Heart left ventricle (tissue), 16 donors: ENCODE measurements at regions of chr4 and their contacts with region 1.

Region 1: GRCh38 chr4:51895813-51896408 is 53.0 kb downstream of the DCUN1D4 start:
- DNase-seq: peak in 4 of 5 donors; percentile 61 to 66 (median 65)
- ATAC-seq: peak; percentile 64 to 96 (median 94)
- H3K4me3 ChIP-seq: no peak overlapping the region
- H3K27ac ChIP-seq: peak overlapping the region in 3 of 12 donors; percentile 0 to 41 (median 31)
- H3K4me1 ChIP-seq: peaks cover 0 to 13% (median 0%) of the 10 kb centered on the region in 12 donors
- H3K27me3 ChIP-seq: no peaks in the 10 kb centered on the region
- CTCF ChIP-seq: peak; percentile 71 to 91 (median 79)
- POLR2A ChIP-seq: no peak

Region 2: DNA sequence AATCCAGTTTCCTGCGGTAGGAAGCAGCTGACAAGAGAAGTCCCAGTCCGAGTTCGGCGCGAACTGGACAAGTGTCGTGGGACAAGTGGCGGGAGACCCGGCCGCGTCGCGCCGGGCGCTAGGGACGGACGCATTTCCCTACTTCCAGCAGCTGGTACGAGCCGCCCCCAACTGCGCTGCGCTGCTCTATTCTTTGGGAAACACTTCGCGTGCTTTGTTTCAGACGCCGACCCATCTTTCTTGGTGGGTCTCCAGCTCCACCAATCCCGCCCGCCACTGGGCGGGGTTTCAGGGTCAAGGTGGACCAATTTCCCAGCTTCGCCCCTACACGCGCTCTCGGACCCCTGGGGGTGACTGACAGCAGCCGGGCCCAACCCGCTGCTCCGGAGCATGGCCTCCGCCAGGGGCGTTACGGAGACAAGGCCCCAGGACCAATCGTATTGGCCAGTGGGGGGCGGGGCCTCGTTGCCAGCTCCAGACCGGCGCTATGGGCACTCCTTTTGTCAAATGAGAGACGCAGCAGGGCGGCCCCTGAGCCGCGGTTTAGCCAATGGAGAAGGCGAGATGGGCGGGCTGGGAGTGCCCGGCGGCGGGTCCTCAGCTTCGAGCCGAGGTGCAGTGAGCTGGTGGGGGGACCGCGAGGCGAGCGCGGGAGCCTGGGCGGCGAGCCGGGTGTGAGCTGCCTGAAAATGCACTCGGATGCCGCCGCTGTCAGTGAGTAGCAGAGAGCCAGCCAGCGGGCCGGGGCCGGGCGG is 53.2 kb before region 1 on chr4 and contains the start of gene DCUN1D4:
- intact Hi-C with region 1: loop called in 1 of 10 experiments (anchors 5 kb)
- DNase-seq: peak; percentile 100
- ATAC-seq: peak; percentile 93 to 98 (median 96)
- H3K4me3 ChIP-seq: peak within 1 kb of the TSS; percentile 68 to 95 (median 88)
- H3K27ac ChIP-seq: peak within 1 kb of the TSS; percentile 76 to 99 (median 93)
- H3K4me1 ChIP-seq: peaks cover 0 to 24% (median 11%) of the 10 kb centered on the region in 12 donors
- H3K27me3 ChIP-seq: no peaks in the 10 kb centered on the region
- CTCF ChIP-seq: peak; percentile 24 to 72 (median 46)
- POLR2A ChIP-seq: peak; percentile 31 to 71
- total RNA-seq, gene DCUN1D4: 16.6 to 54.0 (median 38.1) TPM

Region 3: DNA sequence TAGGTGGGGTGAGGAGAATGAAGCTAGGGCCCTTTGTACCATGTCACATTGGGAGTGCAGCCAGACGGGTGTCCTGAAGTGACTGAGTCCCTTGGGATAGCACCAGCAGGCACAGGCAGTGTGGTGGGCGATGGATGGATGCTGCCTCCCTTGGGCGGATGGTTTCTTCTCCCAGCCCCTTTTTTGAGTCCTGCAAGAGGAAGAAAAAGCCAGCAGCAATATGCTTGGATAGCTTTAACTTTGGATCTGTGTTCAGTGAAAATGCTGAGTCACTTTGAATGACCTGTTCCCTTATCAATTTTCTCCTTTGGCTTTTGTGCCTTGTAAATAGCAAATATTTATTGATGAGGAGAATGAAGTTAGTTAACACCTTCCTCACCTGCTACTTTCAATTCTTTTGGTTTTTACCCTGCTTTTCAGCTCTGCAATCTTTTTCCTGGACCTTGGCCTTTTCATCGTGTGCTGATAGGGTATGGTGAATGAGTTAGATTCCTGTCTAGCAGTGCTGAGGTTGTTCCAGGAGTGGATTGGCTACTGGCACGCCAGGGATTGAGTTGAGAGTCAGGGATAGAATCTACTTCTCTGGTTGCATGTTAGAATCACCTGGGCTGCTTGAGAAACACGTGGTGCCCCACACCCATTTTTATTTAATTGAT is 42.8 kb before region 1 on chr4:
- intact Hi-C with region 1: loop called in 1 of 10 experiments (anchors 5 kb)
- DNase-seq: no peak
- ATAC-seq: peak; percentile 62 to 75 (median 72)
- H3K4me3 ChIP-seq: no peak overlapping the region
- H3K27ac ChIP-seq: peak overlapping the region in 6 of 12 donors; percentile 18 to 44 (median 34)
- H3K4me1 ChIP-seq: peaks cover 0 to 62% (median 35%) of the 10 kb centered on the region in 12 donors
- H3K27me3 ChIP-seq: no peaks in the 10 kb centered on the region
- CTCF ChIP-seq: no peak
- POLR2A ChIP-seq: no peak

Region 4: DNA sequence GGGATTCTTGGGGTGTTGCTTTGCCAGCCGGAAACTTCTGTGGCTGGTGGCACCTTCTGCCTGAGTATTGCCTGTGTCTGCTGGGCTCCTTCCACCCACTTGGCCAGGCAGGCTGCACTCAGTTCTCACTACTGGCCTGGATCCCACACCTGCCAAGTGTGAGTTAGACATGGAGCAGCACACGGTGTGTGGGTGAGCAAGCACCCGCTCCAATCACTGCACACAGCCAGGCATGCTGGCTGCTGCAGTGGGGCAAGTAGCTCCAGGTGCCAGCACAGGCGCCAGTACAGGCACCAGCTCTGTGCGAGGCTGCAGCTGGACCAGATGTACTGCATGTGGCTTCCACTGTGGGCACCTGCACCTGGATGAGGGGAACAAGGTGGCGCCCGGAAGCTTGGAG is 29.1 kb before region 1 on chr4:
- intact Hi-C with region 1: no loop called
- DNase-seq: peak in 4 of 5 donors; percentile 20 to 58 (median 46)
- ATAC-seq: peak; percentile 58 to 93 (median 91)
- H3K4me3 ChIP-seq: no peak overlapping the region
- H3K27ac ChIP-seq: no peak overlapping the region
- H3K4me1 ChIP-seq: peaks cover 0 to 9% (median 0%) of the 10 kb centered on the region in 12 donors
- H3K27me3 ChIP-seq: no peaks in the 10 kb centered on the region
- CTCF ChIP-seq: no peak
- POLR2A ChIP-seq: no peak

Region 5: GRCh38 chr4:51932261-51932660 is 36.4 kb after region 1 on chr4:
- intact Hi-C with region 1: no loop called
- DNase-seq: peak in 2 of 5 donors; percentile 11 to 22
- ATAC-seq: peak; percentile 16 to 58 (median 48)
- H3K4me3 ChIP-seq: no peak overlapping the region
- H3K27ac ChIP-seq: no peak overlapping the region
- H3K4me1 ChIP-seq: peaks cover 0 to 7% (median 0%) of the 10 kb centered on the region in 12 donors
- H3K27me3 ChIP-seq: no peaks in the 10 kb centered on the region
- CTCF ChIP-seq: no peak
- POLR2A ChIP-seq: no peak

Region 6: GRCh38 chr4:52028969-52029368 is 133.1 kb after region 1 on chr4:
- intact Hi-C with region 1: loop called in 8 of 10 experiments (anchors 5 to 10 kb)
- DNase-seq: no peak
- ATAC-seq: no peak
- H3K4me3 ChIP-seq: no peak overlapping the region
- H3K27ac ChIP-seq: no peak overlapping the region
- H3K4me1 ChIP-seq: peaks cover 0 to 7% (median 0%) of the 10 kb centered on the region in 12 donors
- H3K27me3 ChIP-seq: no peaks in the 10 kb centered on the region
- CTCF ChIP-seq: no peak
- POLR2A ChIP-seq: no peak

Region 7: GRCh38 chr4:52135171-52135570 is 239.3 kb after region 1 on chr4:
- intact Hi-C with region 1: loop called in 1 of 10 experiments (anchors 10 kb)
- DNase-seq: no peak
- ATAC-seq: no peak
- H3K4me3 ChIP-seq: no peak overlapping the region
- H3K27ac ChIP-seq: no peak overlapping the region
- H3K4me1 ChIP-seq: no peaks in the 10 kb centered on the region
- H3K27me3 ChIP-seq: peaks cover 0 to 5% (median 0%) of the 10 kb centered on the region in 9 donors
- CTCF ChIP-seq: no peak
- POLR2A ChIP-seq: no peak